ENCODE measurements at regions of chr3 and their contacts with region 1.

Region 1: GRCh38 chr3:90184861-90185260 is 1077.4 kb downstream of the EPHA3 start:
- DNase-seq: no peak
- H3K4me3 ChIP-seq: no peak overlapping the region
- H3K27ac ChIP-seq: no peak overlapping the region
- H3K4me1 ChIP-seq: no peaks in the 10 kb centered on the region
- H3K27me3 ChIP-seq: no peaks in the 10 kb centered on the region
- CTCF ChIP-seq: no peak

Region 2: DNA sequence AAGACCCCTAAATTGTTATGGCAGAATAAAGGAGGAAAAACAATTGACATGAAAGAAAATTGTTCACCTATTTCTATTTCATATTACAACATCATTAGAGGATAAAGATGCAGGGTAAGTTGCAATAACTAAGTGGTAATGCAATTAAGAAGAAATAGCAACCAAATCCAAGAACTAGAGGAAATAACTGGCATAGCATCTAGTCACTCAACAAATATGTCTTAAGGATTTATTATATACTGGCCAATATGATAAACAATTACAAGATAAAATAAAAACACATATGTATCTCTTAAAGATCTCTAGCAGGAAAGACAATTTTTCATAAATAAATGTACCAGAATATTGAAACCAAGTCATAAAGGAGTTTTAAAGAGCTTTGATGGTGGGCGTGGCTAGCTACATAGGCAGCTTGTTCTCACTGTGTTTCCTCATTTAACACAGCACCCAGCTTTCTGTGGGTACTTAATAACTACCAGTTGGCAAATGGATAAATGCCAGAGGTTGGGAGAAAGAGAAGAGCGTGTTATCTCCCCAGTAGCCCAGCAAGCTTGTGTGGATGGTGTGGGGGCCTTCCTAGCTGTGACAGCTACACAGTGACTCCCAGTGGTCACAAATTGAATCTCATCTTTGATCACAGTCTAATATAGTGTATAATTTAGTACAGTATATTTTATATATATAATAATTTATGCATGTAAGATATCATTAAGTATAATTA is 93.5 kb before region 1 on chr3:
- intact Hi-C with region 1: loop called (anchors 10 kb)
- DNase-seq: peak; percentile 19
- H3K4me3 ChIP-seq: no peak overlapping the region
- H3K27ac ChIP-seq: no peak overlapping the region
- H3K4me1 ChIP-seq: no peaks in the 10 kb centered on the region
- H3K27me3 ChIP-seq: no peaks in the 10 kb centered on the region
- CTCF ChIP-seq: peak; percentile 44

Measured in colonic mucosa (tissue), 4 donors.